Breast epithelium (tissue), 4 donors: ENCODE measurements at regions of chr15 and their contacts with region 1.

Region 1: DNA sequence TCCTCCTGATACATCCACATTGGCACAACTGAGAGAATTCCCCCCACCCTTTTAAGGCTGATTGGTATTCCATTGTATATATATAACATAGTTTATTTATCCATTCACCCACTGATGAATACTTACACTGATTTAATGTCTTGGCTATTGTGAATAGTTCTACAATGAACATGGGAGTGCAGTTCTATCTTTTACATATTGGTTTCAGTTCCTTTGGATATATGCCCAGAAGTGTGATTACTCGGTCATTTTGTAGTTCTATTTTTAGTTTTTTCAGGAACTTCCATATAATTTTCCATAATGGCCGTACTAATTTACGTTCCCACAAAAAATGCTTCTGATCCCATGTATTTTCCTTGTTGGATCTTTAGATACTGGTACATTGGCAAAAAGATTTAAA is 135.3 kb downstream of the FMN1 start:
- DNase-seq: no peak
- H3K4me3 ChIP-seq: no peak overlapping the region
- H3K27ac ChIP-seq: no peak overlapping the region
- H3K4me1 ChIP-seq: no peaks in the 10 kb centered on the region
- H3K27me3 ChIP-seq: no peaks in the 10 kb centered on the region
- CTCF ChIP-seq: no peak
- POLR2A ChIP-seq: no peak

Region 2: GRCh38 chr15:33639978-33640377 is 580.8 kb after region 1 on chr15:
- intact Hi-C with region 1: no loop called
- DNase-seq: no peak
- H3K4me3 ChIP-seq: no peak overlapping the region
- H3K27ac ChIP-seq: no peak overlapping the region
- H3K4me1 ChIP-seq: no peaks in the 10 kb centered on the region
- H3K27me3 ChIP-seq: no peaks in the 10 kb centered on the region
- CTCF ChIP-seq: no peak
- POLR2A ChIP-seq: no peak

Region 3: DNA sequence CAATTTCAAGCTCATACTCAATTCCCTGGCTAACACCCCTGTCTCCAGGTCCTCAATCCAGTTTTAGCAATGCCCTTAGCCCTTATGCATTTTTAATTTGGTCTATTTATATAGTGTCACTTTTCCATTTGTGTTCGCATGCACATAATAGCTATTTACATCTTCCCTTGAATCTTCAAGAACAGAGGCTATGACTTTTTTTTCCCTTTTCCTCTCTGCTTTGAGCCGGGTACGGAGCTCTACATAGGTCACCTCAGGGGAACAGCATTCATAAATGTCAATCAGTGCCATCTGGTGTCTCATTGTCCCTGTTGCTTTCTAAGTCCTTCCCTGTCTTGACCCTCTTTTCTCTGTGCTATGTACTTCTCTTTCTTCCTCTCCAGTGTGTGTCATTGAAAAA is 1762.6 kb after region 1 on chr15:
- intact Hi-C with region 1: loop called (anchors 10 kb)
- DNase-seq: no peak
- H3K4me3 ChIP-seq: no peak overlapping the region
- H3K27ac ChIP-seq: no peak overlapping the region
- H3K4me1 ChIP-seq: no peaks in the 10 kb centered on the region
- H3K27me3 ChIP-seq: no peaks in the 10 kb centered on the region
- CTCF ChIP-seq: no peak
- POLR2A ChIP-seq: no peak